GM10248 (cell line): ENCODE measurements at regions of chr17 and their contacts with region 1.

Region 1: DNA sequence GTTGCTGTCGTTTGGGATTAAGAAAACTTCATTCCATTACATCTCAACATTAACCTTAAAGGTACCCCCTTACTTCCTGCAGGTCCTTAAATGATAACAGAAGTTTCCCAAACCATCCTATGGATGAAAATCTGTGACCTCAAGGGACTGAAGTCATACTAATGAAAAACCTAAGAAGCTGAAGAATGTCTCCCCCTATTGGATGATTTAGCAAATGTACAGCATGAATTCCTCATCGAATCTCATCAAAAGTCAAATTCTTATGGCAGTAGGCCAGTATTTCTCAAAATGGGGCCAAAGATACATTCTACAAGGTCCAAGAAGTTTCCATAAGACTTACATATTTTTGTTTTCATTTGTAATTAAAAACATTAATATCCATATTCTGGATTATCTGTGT is 13.5 kb downstream of the SCO1 start:
- DNase-seq: no peak
- CTCF ChIP-seq: peak; percentile 41

Region 2: GRCh38 chr17:10673312-10673711 is 10.5 kb before region 1 on chr17:
- CTCF ChIA-PET with region 1: interaction called, 13 read pairs
- POLR2A ChIA-PET with region 1: no interaction called
- DNase-seq: no peak
- CTCF ChIP-seq: no peak

Region 3: DNA sequence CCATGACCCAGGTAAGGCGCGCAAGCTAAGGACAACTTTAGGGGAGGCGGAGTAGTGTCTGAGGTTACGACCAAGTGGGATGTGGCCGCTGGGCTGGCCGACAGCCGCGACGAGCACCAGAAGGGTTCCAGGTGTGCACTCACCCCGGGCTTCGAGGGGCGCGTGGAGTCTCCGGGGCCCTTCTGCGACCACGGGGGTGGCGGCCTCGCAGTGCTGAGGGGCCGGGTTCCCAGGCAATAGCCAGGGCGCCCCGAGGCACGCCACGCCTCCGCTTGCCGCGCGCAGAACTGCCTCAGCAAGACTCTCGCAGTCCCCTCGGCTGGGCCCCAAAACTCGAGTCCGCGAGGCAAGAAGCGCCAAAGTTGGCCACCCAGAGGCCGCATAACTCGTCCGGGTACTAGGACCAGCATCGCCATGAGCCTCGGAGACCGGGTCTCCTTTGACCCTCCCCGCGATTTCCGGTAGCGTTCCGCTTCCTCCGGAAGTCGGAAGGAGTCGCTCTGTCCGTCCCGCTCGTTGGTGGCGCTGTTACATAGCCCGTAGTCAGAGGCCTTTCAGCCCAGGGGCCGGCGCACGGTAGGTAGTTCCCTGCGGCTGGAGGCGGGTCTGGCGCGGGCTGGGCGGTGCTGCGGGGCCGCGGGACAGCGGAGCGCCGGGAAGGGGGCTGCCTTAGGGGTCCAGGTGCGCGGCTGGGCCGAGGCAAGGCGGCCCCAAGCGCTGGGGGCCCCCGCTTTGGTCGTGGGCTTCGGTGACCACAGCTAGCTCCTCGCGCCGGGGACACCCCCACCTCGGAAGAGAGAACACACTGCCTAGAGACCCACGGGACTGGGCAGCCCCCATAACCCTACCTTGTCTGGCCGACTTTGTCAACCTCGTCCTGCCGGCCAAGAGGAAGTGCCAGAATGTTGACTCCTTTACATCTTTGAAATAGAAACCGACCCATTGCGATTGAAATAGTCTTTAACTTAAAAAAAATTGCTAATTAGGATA is 13.5 kb after region 1 on chr17 and contains the starts of genes ADPRM and SCO1:
- CTCF ChIA-PET with region 1: interaction called, 31 read pairs
- POLR2A ChIA-PET with region 1: no interaction called
- DNase-seq: peak; percentile 94
- CTCF ChIP-seq: peak; percentile 51